Right lobe of liver (tissue), 6 donors: ENCODE measurements at regions of chr9 and their contacts with region 1.

Region 1: GRCh38 chr9:89929673-89930480 is 325.1 kb downstream of the GADD45G start:
- DNase-seq: no peak
- ATAC-seq: peak; percentile 30 to 52 (median 43)
- H3K4me3 ChIP-seq: no peak overlapping the region
- H3K27ac ChIP-seq: no peak overlapping the region
- H3K4me1 ChIP-seq: peaks cover 0 to 32% (median 9%) of the 10 kb centered on the region in 4 donors
- H3K27me3 ChIP-seq: no peaks in the 10 kb centered on the region
- CTCF ChIP-seq: no peak
- POLR2A ChIP-seq: no peak

Region 2: GRCh38 chr9:89597711-89598625 is 331.9 kb before region 1 on chr9:
- intact Hi-C with region 1: loop called in 1 of 2 experiments (anchors 10 kb)
- DNase-seq: peak in 1 of 3 donors; percentile 65
- ATAC-seq: peak; percentile 73 to 76 (median 74)
- H3K4me3 ChIP-seq: no peak overlapping the region
- H3K27ac ChIP-seq: no peak overlapping the region
- H3K4me1 ChIP-seq: peaks cover 0 to 15% (median 3%) of the 10 kb centered on the region in 4 donors
- H3K27me3 ChIP-seq: no peaks in the 10 kb centered on the region
- CTCF ChIP-seq: peak; percentile 81 to 93 (median 86)
- POLR2A ChIP-seq: no peak

Region 3: GRCh38 chr9:89978170-89978569 is 48.3 kb after region 1 on chr9:
- intact Hi-C with region 1: no loop called
- DNase-seq: no peak
- ATAC-seq: peak; percentile 47 to 66 (median 64)
- H3K4me3 ChIP-seq: no peak overlapping the region
- H3K27ac ChIP-seq: no peak overlapping the region
- H3K4me1 ChIP-seq: peaks cover 0 to 3% (median 0%) of the 10 kb centered on the region in 4 donors
- H3K27me3 ChIP-seq: no peaks in the 10 kb centered on the region
- CTCF ChIP-seq: peak; percentile 26 to 41 (median 33)
- POLR2A ChIP-seq: no peak

Region 4: DNA sequence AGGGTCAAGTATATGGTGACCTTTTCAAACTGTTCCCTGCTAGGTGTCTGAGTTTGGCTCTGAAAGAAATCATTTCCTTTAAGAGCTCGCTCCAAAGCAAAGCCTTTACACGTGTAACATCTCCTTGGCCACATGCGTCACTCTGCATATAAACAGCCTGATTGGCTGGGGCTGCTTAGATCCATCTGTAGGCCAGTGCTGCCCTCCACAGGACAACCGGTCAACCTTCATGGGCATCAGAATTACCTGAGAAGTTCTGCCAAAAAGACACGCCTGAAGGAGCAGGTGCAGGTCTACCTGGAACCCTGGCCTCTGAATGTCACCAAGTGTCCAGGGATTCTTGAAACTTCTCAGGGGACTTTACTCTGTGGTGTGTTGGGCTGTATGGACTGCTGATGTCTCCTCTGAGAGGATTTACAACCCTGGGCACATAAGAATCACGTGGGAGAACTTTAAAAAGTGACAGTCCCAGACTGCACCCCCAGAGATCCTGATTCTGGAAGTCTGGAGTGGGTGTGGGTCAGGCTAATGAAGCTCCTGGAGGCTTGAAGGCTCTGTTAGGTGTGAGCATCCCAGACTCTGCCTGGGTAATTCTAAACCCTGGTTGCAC is 172.5 kb after region 1 on chr9:
- intact Hi-C with region 1: loop called (anchors 10 kb)
- DNase-seq: peak; percentile 81 to 86 (median 85)
- ATAC-seq: peak; percentile 86 to 96 (median 95)
- H3K4me3 ChIP-seq: no peak overlapping the region
- H3K27ac ChIP-seq: no peak overlapping the region
- H3K4me1 ChIP-seq: peaks cover 0 to 3% (median 0%) of the 10 kb centered on the region in 4 donors
- H3K27me3 ChIP-seq: no peaks in the 10 kb centered on the region
- CTCF ChIP-seq: peak; percentile 80 to 93 (median 86)
- POLR2A ChIP-seq: no peak

Region 5: DNA sequence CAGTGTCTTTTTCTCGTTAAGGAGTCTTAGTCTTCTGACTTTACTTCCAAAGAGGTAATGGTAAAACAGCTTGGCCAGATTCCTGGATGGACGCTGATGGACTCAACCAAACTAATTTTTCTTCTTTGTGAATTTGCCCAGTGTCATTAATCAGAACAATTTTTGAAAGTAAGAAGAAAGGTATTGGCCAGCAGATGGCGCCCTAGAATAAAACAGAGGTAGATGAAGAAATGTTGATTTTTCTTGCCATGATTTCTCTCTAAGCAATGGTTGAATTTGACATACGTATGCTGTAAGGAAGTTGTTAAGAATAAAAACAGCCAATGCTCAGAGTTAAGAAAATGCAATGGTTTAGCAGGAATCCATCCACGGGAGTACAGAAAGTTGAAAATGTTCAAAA is 212.7 kb after region 1 on chr9:
- intact Hi-C with region 1: no loop called
- DNase-seq: peak in 2 of 3 donors; percentile 25 to 51
- ATAC-seq: peak; percentile 40 to 75 (median 64)
- H3K4me3 ChIP-seq: no peak overlapping the region
- H3K27ac ChIP-seq: no peak overlapping the region
- H3K4me1 ChIP-seq: no peaks in the 10 kb centered on the region
- H3K27me3 ChIP-seq: no peaks in the 10 kb centered on the region
- CTCF ChIP-seq: peak; percentile 57 to 65 (median 64)
- POLR2A ChIP-seq: no peak